ENCODE measurements at regions of chr7 and their contacts with region 1.

Region 1: GRCh38 chr7:99040104-99040958 is 103.6 kb downstream of the SMURF1 start:
- DNase-seq: peak; percentile 31 to 82 (median 52)
- ATAC-seq: peak; percentile 60
- H3K4me3 ChIP-seq: no peak overlapping the region
- H3K4me3 Mint-ChIP-seq: no peak overlapping the region
- H3K27ac ChIP-seq: no peak overlapping the region
- H3K27ac Mint-ChIP-seq: peak overlapping the region; percentile 40
- H3K4me1 ChIP-seq: peaks cover 3% of the 10 kb centered on the region
- H3K4me1 Mint-ChIP-seq: peaks cover 7% of the 10 kb centered on the region
- H3K27me3 ChIP-seq: no peaks in the 10 kb centered on the region
- H3K27me3 Mint-ChIP-seq: no peaks in the 10 kb centered on the region
- CTCF ChIP-seq: peak; percentile 71

Region 2: GRCh38 chr7:99312316-99313203 is 272.2 kb after region 1 on chr7:
- CTCF ChIA-PET with region 1: interaction called, 4 read pairs
- POLR2A ChIA-PET with region 1: no interaction called
- intact Hi-C with region 1: loop called (anchors 1 kb)
- DNase-seq: peak; percentile 60 to 84 (median 67)
- ATAC-seq: peak; percentile 85
- H3K4me3 ChIP-seq: peak overlapping the region; percentile 22
- H3K4me3 Mint-ChIP-seq: peak overlapping the region; percentile 48
- H3K27ac ChIP-seq: no peak overlapping the region
- H3K27ac Mint-ChIP-seq: no peak overlapping the region
- H3K4me1 ChIP-seq: peaks cover 9% of the 10 kb centered on the region
- H3K4me1 Mint-ChIP-seq: peaks cover 6% of the 10 kb centered on the region
- H3K27me3 ChIP-seq: peaks cover 0 to 2% of the 10 kb centered on the region in 2 experiments
- H3K27me3 Mint-ChIP-seq: peaks cover 14% of the 10 kb centered on the region
- CTCF ChIP-seq: peak; percentile 85